ENCODE measurements at regions of chr17 and their contacts with region 1.

Region 1: GRCh38 chr17:47698749-47699535 is 5.0 kb downstream of the TBKBP1 start:
- DNase-seq: peak; percentile 87
- ATAC-seq: peak; percentile 30
- H3K4me3 Mint-ChIP-seq: no peak overlapping the region
- H3K27ac Mint-ChIP-seq: peak overlapping the region; percentile 65
- H3K4me1 Mint-ChIP-seq: peaks cover 54% of the 10 kb centered on the region
- H3K27me3 Mint-ChIP-seq: no peaks in the 10 kb centered on the region

Region 2: GRCh38 chr17:47663912-47664625 is 34.9 kb before region 1 on chr17:
- CTCF ChIA-PET with region 1: interaction called, 10 read pairs
- POLR2A ChIA-PET with region 1: interaction called, 3 read pairs
- DNase-seq: peak; percentile 75
- ATAC-seq: peak; percentile 61
- H3K4me3 Mint-ChIP-seq: no peak overlapping the region
- H3K27ac Mint-ChIP-seq: peak overlapping the region; percentile 39
- H3K4me1 Mint-ChIP-seq: peaks cover 36% of the 10 kb centered on the region
- H3K27me3 Mint-ChIP-seq: no peaks in the 10 kb centered on the region

Region 3: GRCh38 chr17:47713980-47714700 is 15.2 kb after region 1 on chr17:
- CTCF ChIA-PET with region 1: interaction called, 113 read pairs
- POLR2A ChIA-PET with region 1: interaction called, 24 read pairs
- DNase-seq: no peak
- ATAC-seq: no peak
- H3K4me3 Mint-ChIP-seq: no peak overlapping the region
- H3K27ac Mint-ChIP-seq: peak overlapping the region; percentile 59
- H3K4me1 Mint-ChIP-seq: peaks cover 75% of the 10 kb centered on the region
- H3K27me3 Mint-ChIP-seq: no peaks in the 10 kb centered on the region

Region 4: DNA sequence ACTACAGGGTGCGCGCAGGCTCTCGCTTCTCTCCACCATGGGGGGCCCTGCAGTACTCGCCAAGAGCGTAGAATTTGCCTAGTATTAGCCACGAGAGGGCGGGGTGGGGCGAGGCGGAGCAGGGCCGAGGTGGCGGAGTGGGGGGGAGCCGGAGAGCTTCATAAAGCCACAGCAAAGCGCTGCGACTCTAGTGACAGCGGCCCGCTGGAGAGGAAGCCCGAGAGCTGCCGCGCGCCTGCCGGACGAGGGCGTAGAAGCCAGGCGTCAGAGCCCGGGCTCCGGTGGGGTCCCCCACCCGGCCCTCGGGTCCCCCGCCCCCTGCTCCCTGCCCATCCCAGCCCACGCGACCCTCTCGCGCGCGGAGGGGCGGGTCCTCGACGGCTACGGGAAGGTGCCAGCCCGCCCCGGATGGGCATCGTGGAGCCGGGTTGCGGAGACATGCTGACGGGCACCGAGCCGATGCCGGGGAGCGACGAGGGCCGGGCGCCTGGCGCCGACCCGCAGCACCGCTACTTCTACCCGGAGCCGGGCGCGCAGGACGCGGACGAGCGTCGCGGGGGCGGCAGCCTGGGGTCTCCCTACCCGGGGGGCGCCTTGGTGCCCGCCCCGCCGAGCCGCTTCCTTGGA is 34.2 kb after region 1 on chr17 and contains the start of gene TBX21:
- CTCF ChIA-PET with region 1: interaction called, 474 read pairs
- POLR2A ChIA-PET with region 1: interaction called, 34 read pairs
- DNase-seq: peak; percentile 97
- ATAC-seq: peak; percentile 87
- H3K4me3 Mint-ChIP-seq: peak within 1 kb of the TSS; percentile 93
- H3K27ac Mint-ChIP-seq: peak within 1 kb of the TSS; percentile 90
- H3K4me1 Mint-ChIP-seq: peaks cover 81% of the 10 kb centered on the region
- H3K27me3 Mint-ChIP-seq: no peaks in the 10 kb centered on the region
- total RNA-seq, gene TBX21: 27.4 to 27.5 TPM

Measured in activated CD8-positive, alpha-beta T cell treated with anti-CD3 and anti-CD28 coated beads, Interleukin-2, amount 10 ng/mL, durations not matched to agents 7 days and 5 days (primary cell).